HAP-1 (cell line): ENCODE measurements at regions of chr12 and their contacts with region 1.

Region 1: DNA sequence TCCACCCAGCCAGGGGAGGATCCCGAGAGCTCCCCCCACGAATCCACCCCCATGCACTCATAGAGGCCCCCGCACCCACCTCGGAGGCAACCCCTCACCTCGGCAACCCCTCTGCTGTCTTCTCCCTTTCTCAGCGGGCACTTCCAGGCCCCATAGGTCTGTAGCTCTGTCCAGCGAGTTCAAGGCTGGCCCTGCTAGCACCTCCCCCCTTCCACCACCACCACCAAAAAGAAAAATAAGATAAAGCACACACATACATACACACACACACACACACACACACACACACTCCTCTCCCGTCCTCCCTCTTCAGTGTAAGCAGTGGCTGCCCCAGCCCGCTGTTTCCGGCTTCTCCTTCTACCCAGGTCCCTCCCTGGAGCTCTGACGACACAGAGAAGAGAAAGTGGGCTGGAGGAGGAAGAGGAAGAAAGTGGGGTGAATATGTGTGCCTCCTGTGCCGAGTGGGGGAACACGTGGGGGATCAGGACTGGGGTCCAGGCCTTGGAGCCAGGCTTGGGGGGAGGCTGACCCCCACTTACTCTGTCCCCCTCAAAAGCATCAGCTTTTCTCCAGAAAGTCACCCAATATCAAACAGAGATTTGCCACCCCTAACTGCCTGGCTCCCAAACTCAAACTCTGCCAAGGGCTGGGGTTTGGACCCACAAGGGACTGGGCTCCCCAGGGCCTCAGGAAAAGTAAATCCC is at the start of gene STAT6:
- DNase-seq: peak; percentile 58 to 76
- H3K4me3 ChIP-seq: peak within 1 kb of the TSS; percentile 32
- H3K4me1 ChIP-seq: peaks cover 31% of the 10 kb centered on the region
- H3K27me3 ChIP-seq: no peaks in the 10 kb centered on the region

Region 2: GRCh38 chr12:56766535-56766934 is 344.6 kb before region 1 on chr12:
- in situ Hi-C with region 1: loop called (anchors 10 kb)
- DNase-seq: no peak
- H3K4me3 ChIP-seq: no peak overlapping the region
- H3K4me1 ChIP-seq: no peaks in the 10 kb centered on the region
- H3K27me3 ChIP-seq: no peaks in the 10 kb centered on the region

Region 3: DNA sequence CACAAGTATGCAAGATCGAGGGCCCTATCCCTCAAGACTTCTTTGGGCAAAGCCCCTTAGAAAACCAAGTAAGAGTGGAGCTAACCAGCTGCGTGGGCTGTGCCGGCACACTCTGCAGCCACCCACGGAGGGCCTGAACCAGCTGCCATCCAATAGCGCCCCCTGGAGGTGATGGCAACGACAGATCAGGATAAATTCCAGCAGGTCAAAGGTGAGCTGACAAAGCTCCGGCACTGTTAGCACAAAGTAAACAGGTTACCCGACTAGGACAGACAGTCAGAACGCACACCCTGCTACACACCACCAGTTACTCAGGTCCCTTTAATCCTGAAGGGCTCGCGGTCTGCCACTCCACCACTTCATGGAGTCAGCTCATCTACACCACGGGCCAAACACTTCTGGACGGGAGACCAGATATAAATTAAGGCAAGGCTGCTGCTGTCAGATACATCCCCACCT is 109.7 kb before region 1 on chr12:
- in situ Hi-C with region 1: loop called (anchors 5 kb)
- DNase-seq: peak; percentile 8 to 82
- H3K4me3 ChIP-seq: no peak overlapping the region
- H3K4me1 ChIP-seq: peaks cover 6% of the 10 kb centered on the region
- H3K27me3 ChIP-seq: no peaks in the 10 kb centered on the region

Region 4: DNA sequence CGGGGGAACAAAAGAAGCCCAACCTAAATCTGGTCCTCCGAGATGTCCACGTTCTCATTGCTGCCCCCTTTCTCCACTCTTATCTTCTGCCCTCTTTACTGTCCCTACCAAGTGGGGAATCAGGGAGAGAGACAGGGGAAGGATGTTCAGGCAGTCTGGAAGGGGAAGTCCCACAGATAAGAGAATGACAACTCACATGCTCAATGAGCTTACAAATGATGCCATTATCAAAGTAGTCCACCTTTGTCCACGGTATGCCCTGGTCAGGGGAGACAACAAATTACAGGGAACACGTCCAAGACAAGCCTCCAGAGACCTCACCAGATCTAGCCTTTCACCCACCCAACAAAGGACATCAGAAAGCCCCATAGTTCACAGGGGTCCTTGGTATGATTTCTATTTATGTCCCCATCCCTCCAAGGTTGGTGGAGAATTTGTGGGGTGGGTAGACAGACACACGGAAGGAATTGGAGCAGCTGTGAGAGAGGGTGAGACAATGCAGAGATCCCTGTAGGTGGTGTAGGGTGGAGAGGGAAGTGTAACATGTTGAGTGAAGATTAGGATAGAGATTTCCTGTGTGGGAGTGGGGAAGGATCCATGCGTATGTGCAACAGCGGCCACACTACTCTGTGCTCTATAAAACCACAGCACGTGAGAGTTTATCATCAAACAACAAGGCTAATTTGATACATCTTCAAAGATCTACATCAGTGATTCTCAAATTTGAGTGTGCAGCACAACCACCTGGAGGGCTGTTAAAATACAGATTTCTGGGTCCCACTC is 72.0 kb before region 1 on chr12:
- in situ Hi-C with region 1: no loop called
- DNase-seq: no peak
- H3K4me3 ChIP-seq: no peak overlapping the region
- H3K4me1 ChIP-seq: no peaks in the 10 kb centered on the region
- H3K27me3 ChIP-seq: no peaks in the 10 kb centered on the region

Region 5: GRCh38 chr12:57069523-57069922 is 41.7 kb before region 1 on chr12:
- in situ Hi-C with region 1: loop called (anchors 5 kb)
- DNase-seq: peak; percentile 52 to 68
- H3K4me3 ChIP-seq: no peak overlapping the region
- H3K4me1 ChIP-seq: no peaks in the 10 kb centered on the region
- H3K27me3 ChIP-seq: no peaks in the 10 kb centered on the region